ENCODE measurements at regions of chr2 and their contacts with region 1.

Region 1: DNA sequence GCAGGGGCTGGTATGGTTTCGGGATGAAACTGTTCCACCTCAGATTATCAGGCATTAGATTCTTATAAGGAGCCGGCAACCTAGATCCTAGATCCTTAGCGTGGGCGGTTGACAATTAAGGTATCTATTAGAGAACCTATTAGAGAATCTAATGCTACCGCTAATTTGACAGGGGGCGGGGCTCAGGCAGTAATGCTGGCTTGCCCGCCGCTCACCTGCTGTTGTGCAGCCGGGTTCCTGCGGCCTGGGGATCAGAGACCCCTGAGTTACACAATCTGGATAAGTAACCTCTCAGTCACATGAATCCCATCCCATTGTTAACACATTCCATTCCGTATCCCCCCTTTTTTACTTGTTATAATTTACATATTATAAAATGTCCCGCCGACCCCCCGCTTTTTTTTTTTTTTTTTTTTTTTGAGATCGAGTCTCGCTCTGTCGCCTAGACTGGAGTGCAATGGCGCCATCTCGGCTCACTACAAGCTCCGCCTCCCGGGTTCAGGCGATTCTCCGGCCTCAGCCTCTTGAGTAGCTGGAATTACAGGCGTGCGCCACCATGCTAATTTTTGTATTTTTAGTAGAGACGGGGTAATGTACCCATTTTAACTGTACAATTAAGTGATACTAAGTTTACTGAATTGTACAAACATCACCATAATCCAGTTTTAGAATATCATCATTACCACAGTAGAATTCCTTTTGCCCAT is 42.0 kb upstream of the GPD2 start:
- DNase-seq: no peak
- ATAC-seq: no peak
- H3K4me3 ChIP-seq: no peak overlapping the region
- H3K27ac ChIP-seq: no peak overlapping the region
- H3K4me1 ChIP-seq: peaks cover under 1% of the 10 kb centered on the region
- H3K27me3 ChIP-seq: no peaks in the 10 kb centered on the region
- CTCF ChIP-seq: no peak

Region 2: GRCh38 chr2:156356014-156356754 is 38.0 kb before region 1 on chr2:
- intact Hi-C with region 1: loop called in 1 of 2 experiments (anchors 5 kb)
- DNase-seq: no peak
- ATAC-seq: no peak
- H3K4me3 ChIP-seq: no peak overlapping the region
- H3K27ac ChIP-seq: no peak overlapping the region
- H3K4me1 ChIP-seq: no peaks in the 10 kb centered on the region
- H3K27me3 ChIP-seq: no peaks in the 10 kb centered on the region
- CTCF ChIP-seq: no peak

Measured in psoas muscle (tissue), 8 donors.